CD8-positive, alpha-beta T cell (primary cell): ENCODE measurements at regions of chr11 and their contacts with region 1.

Region 1: GRCh38 chr11:695538-696248 is at the start of gene TMEM80:
- DNase-seq: peak; percentile 94 to 99 (median 97)
- ATAC-seq: peak; percentile 57
- H3K4me3 ChIP-seq: peak within 1 kb of the TSS; percentile 98
- H3K4me3 Mint-ChIP-seq: peak within 1 kb of the TSS; percentile 86
- H3K27ac ChIP-seq: peak within 1 kb of the TSS; percentile 94 to 100
- H3K27ac Mint-ChIP-seq: peak within 1 kb of the TSS; percentile 96
- H3K4me1 ChIP-seq: peaks cover 53% of the 10 kb centered on the region
- H3K4me1 Mint-ChIP-seq: peaks cover 55% of the 10 kb centered on the region
- H3K27me3 ChIP-seq: no peaks in the 10 kb centered on the region
- H3K27me3 Mint-ChIP-seq: no peaks in the 10 kb centered on the region
- CTCF ChIP-seq: no peak
- total RNA-seq, gene TMEM80: 24.8 to 25.2 TPM

Region 2: DNA sequence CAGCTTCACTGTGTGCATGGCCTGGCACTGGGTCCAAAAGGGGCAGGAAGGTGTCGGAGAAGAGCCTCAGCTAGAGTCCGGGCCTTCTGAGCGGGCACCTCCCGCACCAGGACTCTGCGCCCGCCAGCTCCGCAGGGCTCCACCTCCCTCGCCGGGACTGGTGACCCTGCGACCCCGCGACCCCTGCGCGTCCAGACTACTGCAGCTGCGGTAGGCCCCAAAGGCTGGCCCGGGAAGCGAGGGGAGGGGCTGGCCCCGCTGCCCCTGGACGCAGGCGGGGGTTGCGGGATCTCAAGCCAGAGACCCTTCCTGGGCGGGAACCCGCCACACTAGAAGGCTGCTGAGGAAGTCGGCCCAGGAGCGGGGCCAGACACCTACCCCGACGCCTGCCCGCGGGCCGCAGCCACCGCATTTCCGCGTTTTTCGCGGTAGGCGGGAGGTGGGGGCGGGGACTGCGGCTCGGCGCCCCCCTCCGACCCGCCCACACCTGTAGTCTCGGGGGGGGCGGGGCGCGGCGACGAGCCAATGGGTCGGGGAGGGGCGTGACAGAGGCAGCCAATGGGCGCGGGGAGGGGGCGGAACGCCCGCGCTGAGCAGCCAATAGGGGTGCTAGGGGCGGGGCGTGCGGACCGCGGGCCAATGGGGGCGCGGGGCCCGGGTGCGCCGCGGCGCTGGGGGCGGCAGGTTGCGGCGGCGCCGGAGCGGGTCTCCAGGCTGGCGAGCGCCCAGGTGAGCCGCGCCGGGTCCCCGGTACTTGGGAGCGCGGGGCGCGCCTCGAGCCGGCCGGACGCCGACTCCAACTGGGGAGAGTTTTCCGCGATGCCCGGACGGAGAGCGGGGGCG is 135.2 kb before region 1 on chr11 and contains the starts of genes LMNTD2 and RASSF7:
- CTCF ChIA-PET with region 1: interaction called, 4 read pairs
- POLR2A ChIA-PET with region 1: interaction called, 3 read pairs
- intact Hi-C with region 1: loop called in 1 of 2 experiments (anchors 2 kb)
- DNase-seq: peak; percentile 92 to 98 (median 95)
- ATAC-seq: peak; percentile 94
- H3K4me3 ChIP-seq: peak within 1 kb of the TSS; percentile 51 to 94
- H3K4me3 Mint-ChIP-seq: peak within 1 kb of the TSS; percentile 88
- H3K27ac ChIP-seq: peak within 1 kb of the TSS; percentile 51 to 76
- H3K27ac Mint-ChIP-seq: peak within 1 kb of the TSS; percentile 84
- H3K4me1 ChIP-seq: peaks cover 19% of the 10 kb centered on the region
- H3K4me1 Mint-ChIP-seq: peaks cover 18% of the 10 kb centered on the region
- H3K27me3 ChIP-seq: no peaks in the 10 kb centered on the region
- H3K27me3 Mint-ChIP-seq: no peaks in the 10 kb centered on the region
- CTCF ChIP-seq: no peak
- total RNA-seq, gene LMNTD2: 4.2 to 5.6 TPM
- total RNA-seq, gene RASSF7: 11.8 to 15.3 TPM

Region 3: GRCh38 chr11:568306-569157 is 127.2 kb before region 1 on chr11:
- CTCF ChIA-PET with region 1: no interaction called
- POLR2A ChIA-PET with region 1: interaction called, 3 read pairs
- intact Hi-C with region 1: loop called in 1 of 2 experiments (anchors 1 kb)
- DNase-seq: peak; percentile 82 to 97 (median 92)
- ATAC-seq: peak; percentile 92
- H3K4me3 ChIP-seq: peak overlapping the region; percentile 64 to 71
- H3K4me3 Mint-ChIP-seq: peak overlapping the region; percentile 80
- H3K27ac ChIP-seq: peak overlapping the region; percentile 45 to 68
- H3K27ac Mint-ChIP-seq: peak overlapping the region; percentile 64
- H3K4me1 ChIP-seq: peaks cover 8% of the 10 kb centered on the region
- H3K4me1 Mint-ChIP-seq: peaks cover 11% of the 10 kb centered on the region
- H3K27me3 ChIP-seq: no peaks in the 10 kb centered on the region
- H3K27me3 Mint-ChIP-seq: no peaks in the 10 kb centered on the region
- CTCF ChIP-seq: no peak

Region 4: DNA sequence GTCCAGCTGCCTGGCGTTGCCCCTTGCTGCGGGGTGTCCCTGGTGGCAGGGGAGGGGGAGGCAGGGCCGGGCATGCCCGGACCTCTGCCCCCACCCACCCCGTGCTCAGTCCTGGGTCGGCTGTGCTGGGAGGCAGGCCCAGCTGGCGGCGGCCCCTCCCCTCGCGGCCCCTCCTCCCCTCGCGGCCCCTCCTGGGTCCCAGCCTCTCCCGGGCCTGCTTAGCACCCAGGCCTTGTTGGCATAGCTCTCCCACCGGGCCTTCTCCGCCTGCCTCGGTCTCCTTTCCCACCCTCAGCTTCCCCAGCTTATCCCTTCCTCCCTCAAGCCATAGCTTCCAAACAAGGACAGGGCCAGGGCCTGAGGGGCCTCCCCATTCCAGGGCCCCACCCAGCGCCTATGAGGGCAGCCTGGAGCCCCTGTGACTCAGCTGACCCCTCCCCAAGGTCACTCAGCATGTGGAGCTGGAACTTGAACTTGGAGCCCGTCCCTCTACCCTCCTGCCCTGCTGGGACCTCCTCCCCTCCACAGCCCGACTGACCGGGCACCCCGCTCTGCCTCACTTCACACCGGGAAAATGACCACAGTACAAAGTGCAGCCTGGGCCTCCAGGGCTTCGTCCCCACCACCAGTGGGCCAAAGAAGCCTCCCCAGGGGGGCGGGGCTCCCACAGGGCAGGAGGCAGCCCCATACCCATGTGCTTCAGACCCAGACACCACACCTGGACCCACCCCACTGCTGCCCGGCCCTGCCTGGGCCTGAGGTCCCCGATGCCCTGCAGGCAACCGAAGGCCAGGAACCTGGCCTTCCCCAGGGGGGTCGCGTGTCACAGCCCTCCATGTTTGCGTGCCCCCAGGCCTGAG is 11.5 kb after region 1 on chr11:
- CTCF ChIA-PET with region 1: no interaction called
- POLR2A ChIA-PET with region 1: interaction called, 13 read pairs
- intact Hi-C with region 1: no loop called
- DNase-seq: no peak
- ATAC-seq: no peak
- H3K4me3 ChIP-seq: no peak overlapping the region
- H3K4me3 Mint-ChIP-seq: no peak overlapping the region
- H3K27ac ChIP-seq: no peak overlapping the region
- H3K27ac Mint-ChIP-seq: no peak overlapping the region
- H3K4me1 ChIP-seq: peaks cover 28% of the 10 kb centered on the region
- H3K4me1 Mint-ChIP-seq: peaks cover 4% of the 10 kb centered on the region
- H3K27me3 ChIP-seq: peaks cover 7 to 21% of the 10 kb centered on the region in 2 experiments
- H3K27me3 Mint-ChIP-seq: peaks cover 21% of the 10 kb centered on the region
- CTCF ChIP-seq: no peak

Region 5: GRCh38 chr11:727859-728748 is 32.4 kb after region 1 on chr11:
- CTCF ChIA-PET with region 1: interaction called, 24 read pairs
- POLR2A ChIA-PET with region 1: interaction called, 40 read pairs
- intact Hi-C with region 1: loop called (anchors 1 to 2 kb)
- DNase-seq: peak; percentile 64 to 88 (median 83)
- ATAC-seq: peak; percentile 84
- H3K4me3 ChIP-seq: no peak overlapping the region
- H3K4me3 Mint-ChIP-seq: no peak overlapping the region
- H3K27ac ChIP-seq: no peak overlapping the region
- H3K27ac Mint-ChIP-seq: no peak overlapping the region
- H3K4me1 ChIP-seq: peaks cover 19% of the 10 kb centered on the region
- H3K4me1 Mint-ChIP-seq: peaks cover 10% of the 10 kb centered on the region
- H3K27me3 ChIP-seq: peaks cover 0 to 3% of the 10 kb centered on the region in 2 experiments
- H3K27me3 Mint-ChIP-seq: peaks cover 3% of the 10 kb centered on the region
- CTCF ChIP-seq: peak; percentile 94

Region 6: GRCh38 chr11:765025-765801 is 69.5 kb after region 1 on chr11:
- CTCF ChIA-PET with region 1: interaction called, 3 read pairs
- POLR2A ChIA-PET with region 1: no interaction called
- intact Hi-C with region 1: loop called (anchors 1 to 2 kb)
- DNase-seq: peak; percentile 41 to 80 (median 70)
- ATAC-seq: peak; percentile 94
- H3K4me3 ChIP-seq: no peak overlapping the region
- H3K4me3 Mint-ChIP-seq: no peak overlapping the region
- H3K27ac ChIP-seq: no peak overlapping the region
- H3K27ac Mint-ChIP-seq: no peak overlapping the region
- H3K4me1 ChIP-seq: no peaks in the 10 kb centered on the region
- H3K4me1 Mint-ChIP-seq: no peaks in the 10 kb centered on the region
- H3K27me3 ChIP-seq: no peaks in the 10 kb centered on the region
- H3K27me3 Mint-ChIP-seq: no peaks in the 10 kb centered on the region
- CTCF ChIP-seq: peak; percentile 63

Region 7: GRCh38 chr11:1121813-1122663 is 426.3 kb after region 1 on chr11:
- CTCF ChIA-PET with region 1: no interaction called
- POLR2A ChIA-PET with region 1: no interaction called
- intact Hi-C with region 1: no loop called
- DNase-seq: peak in 1 of 9 experiments; percentile 43
- ATAC-seq: no peak
- H3K4me3 ChIP-seq: no peak overlapping the region
- H3K4me3 Mint-ChIP-seq: no peak overlapping the region
- H3K27ac ChIP-seq: no peak overlapping the region
- H3K27ac Mint-ChIP-seq: no peak overlapping the region
- H3K4me1 ChIP-seq: no peaks in the 10 kb centered on the region
- H3K4me1 Mint-ChIP-seq: no peaks in the 10 kb centered on the region
- H3K27me3 ChIP-seq: peaks cover 0 to 4% of the 10 kb centered on the region in 2 experiments
- H3K27me3 Mint-ChIP-seq: peaks cover 5% of the 10 kb centered on the region
- CTCF ChIP-seq: no peak

Region 8: GRCh38 chr11:1389103-1389931 is 693.6 kb after region 1 on chr11:
- CTCF ChIA-PET with region 1: no interaction called
- POLR2A ChIA-PET with region 1: no interaction called
- intact Hi-C with region 1: loop called in 1 of 2 experiments (anchors 5 kb)
- DNase-seq: peak; percentile 93 to 98 (median 97)
- ATAC-seq: peak; percentile 94
- H3K4me3 ChIP-seq: peak overlapping the region; percentile 66 to 78
- H3K4me3 Mint-ChIP-seq: peak overlapping the region; percentile 74
- H3K27ac ChIP-seq: no peak overlapping the region
- H3K27ac Mint-ChIP-seq: no peak overlapping the region
- H3K4me1 ChIP-seq: peaks cover 15% of the 10 kb centered on the region
- H3K4me1 Mint-ChIP-seq: peaks cover 11% of the 10 kb centered on the region
- H3K27me3 ChIP-seq: peaks cover 6 to 11% of the 10 kb centered on the region in 2 experiments
- H3K27me3 Mint-ChIP-seq: peaks cover 23% of the 10 kb centered on the region
- CTCF ChIP-seq: no peak